ENCODE measurements at regions of chr13 and their contacts with region 1.

Region 1: DNA sequence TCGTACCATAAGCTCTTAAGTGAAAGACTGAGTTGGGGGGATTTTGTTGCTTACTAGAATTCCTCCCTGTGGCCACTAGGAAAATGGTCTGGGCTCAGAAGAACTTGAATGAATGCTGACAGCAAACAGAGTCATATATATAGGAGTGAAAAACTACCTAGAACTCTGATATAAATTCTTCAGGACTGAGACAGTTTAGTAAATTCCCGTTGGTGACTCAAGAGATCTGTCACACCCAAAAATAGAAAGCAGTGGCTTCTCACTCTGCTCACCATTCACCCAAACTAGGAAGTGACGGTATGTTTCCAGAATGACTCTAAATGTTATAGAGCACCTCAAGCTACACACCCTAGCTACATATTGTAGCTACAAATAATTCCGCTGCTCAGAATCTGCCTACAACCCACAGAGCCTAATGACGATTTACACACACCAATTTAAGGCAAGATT is 116.2 kb downstream of the TBC1D4 start:
- DNase-seq: no peak

Region 2: DNA sequence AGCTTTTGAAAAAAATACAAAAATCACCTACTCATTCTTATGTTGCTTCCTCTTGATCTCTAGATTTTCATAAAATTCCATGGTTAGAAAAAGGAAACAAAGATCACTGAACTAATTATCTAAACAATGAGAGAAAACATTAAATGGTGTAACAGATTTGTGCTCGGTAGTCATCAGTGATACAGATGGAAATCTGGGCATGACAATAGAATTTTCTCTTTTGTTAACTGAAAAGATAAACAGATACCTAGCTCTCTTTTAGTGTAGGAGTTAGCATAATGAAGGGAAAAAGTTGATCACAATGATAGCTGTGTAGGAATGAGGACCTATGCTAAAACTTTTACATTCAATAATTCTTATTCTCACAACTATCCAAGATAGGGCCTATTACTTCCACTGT is 12.6 kb after region 1 on chr13:
- CTCF ChIA-PET with region 1: interaction called, 26 read pairs
- POLR2A ChIA-PET with region 1: no interaction called
- DNase-seq: no peak

Measured in HEK293T (cell line).